Heart left ventricle (tissue), 16 donors: ENCODE measurements at regions of chr1 and their contacts with region 1.

Region 1: DNA sequence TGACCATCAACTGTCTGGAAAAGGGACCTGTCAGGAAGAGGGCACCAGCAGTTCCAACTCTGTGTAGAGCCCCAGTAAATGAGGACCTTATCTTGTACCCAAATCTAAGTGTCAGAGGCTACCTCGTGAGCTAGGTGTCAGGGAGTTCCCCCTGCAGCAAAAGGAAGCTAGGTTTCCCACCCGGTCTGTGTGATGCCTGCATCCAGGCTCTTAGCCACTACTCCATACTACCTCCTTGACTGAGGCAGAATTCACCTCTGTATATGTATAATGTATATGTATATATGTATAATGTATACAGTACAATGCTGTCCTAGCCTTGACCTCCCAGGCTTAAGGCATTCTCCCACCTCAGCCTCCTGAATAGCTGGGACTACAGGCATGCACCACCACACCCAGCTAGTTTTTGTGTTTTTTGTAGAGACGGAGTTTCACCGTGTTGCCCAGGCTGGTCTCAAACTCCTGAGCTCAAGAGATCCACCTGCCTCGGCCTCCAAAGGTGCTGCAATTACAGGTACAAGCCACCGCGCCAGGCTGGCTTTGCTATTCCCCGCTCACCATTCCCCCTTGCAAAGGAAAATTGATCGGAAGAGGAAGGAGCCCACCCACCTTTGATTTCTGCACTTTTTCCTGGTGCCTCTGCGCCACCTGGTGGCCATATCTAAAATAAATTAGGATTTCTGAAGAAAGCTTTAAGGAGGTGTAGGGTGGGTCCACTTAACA is 15.7 kb upstream of the LUZP1 start:
- DNase-seq: peak in 1 of 5 donors; percentile 23
- ATAC-seq: peak; percentile 18 to 42 (median 22)
- H3K4me3 ChIP-seq: peak overlapping the region in 9 of 12 donors; percentile 37 to 58 (median 44)
- H3K27ac ChIP-seq: no peak overlapping the region
- H3K4me1 ChIP-seq: peaks cover 0 to 8% (median 5%) of the 10 kb centered on the region in 12 donors
- H3K27me3 ChIP-seq: no peaks in the 10 kb centered on the region
- CTCF ChIP-seq: peak; percentile 57 to 93 (median 86)
- POLR2A ChIP-seq: no peak

Region 2: GRCh38 chr1:22971161-22972066 is 213.0 kb before region 1 on chr1:
- intact Hi-C with region 1: loop called (anchors 2 to 10 kb)
- DNase-seq: no peak
- ATAC-seq: no peak
- H3K4me3 ChIP-seq: no peak overlapping the region
- H3K27ac ChIP-seq: no peak overlapping the region
- H3K4me1 ChIP-seq: no peaks in the 10 kb centered on the region
- H3K27me3 ChIP-seq: peaks cover 0 to 50% (median 7%) of the 10 kb centered on the region in 9 donors
- CTCF ChIP-seq: no peak
- POLR2A ChIP-seq: no peak